CD4-positive, alpha-beta memory T cell (primary cell): ENCODE measurements at regions of chr13 and their contacts with region 1.

Region 1: DNA sequence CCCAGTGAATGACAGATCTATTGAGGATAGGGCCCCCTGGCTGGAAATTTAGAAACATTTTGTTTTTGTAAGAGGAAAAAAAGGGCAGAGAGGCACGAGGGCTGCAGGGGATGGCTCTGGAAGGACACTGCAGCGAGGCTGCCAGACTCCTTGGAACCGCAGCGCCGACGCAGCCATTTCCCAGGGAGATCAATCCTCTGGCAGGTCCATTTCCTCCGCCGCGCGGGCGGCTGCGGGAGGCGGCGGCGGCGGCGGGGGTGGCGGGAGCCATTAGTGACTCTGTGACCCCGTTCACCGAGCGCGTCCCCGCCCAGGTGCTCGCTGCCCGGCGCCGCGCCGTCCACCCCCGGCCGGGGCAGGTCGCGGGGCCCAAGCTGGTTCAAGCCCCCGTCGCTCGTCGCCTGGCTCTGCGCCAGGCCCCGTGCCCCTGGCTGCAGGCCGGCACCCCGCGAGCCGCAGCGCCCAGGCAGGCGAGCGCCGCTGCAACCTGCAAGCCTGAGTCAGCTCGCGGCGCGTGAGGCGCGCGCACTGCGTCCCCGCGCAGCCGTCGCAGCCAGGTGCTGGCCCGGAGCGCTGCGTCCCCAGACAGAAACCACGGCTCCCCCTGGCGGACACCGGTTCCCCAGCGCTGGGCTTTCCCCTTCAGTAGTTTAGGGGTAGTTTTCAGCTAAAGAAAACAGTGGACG is 192.6 kb downstream of the KATNAL1 start:
- DNase-seq: peak; percentile 89 to 91 (median 90)
- H3K4me3 ChIP-seq: peak overlapping the region in 1 of 2 donors; percentile 30
- H3K4me3 Mint-ChIP-seq: peak overlapping the region; percentile 80 to 88 (median 86)
- H3K27ac ChIP-seq: peak overlapping the region; percentile 22
- H3K27ac Mint-ChIP-seq: peak overlapping the region; percentile 64 to 94 (median 85)
- H3K4me1 ChIP-seq: peaks cover 29% of the 10 kb centered on the region
- H3K4me1 Mint-ChIP-seq: peaks cover 18 to 47% (median 34%) of the 10 kb centered on the region in 4 donors
- H3K27me3 ChIP-seq: no peaks in the 10 kb centered on the region
- H3K27me3 Mint-ChIP-seq: no peaks in the 10 kb centered on the region

Region 2: GRCh38 chr13:29508130-29508875 is 606.4 kb before region 1 on chr13:
- CTCF ChIA-PET with region 1: interaction called, 41 read pairs
- POLR2A ChIA-PET with region 1: interaction called, 6 read pairs
- intact Hi-C with region 1: loop called (anchors 1 kb)
- DNase-seq: peak; percentile 52 to 65 (median 55)
- H3K4me3 ChIP-seq: no peak overlapping the region
- H3K4me3 Mint-ChIP-seq: no peak overlapping the region
- H3K27ac ChIP-seq: no peak overlapping the region
- H3K27ac Mint-ChIP-seq: peak overlapping the region in 1 of 7 donors; percentile 24
- H3K4me1 ChIP-seq: no peaks in the 10 kb centered on the region
- H3K4me1 Mint-ChIP-seq: peaks cover 0 to 4% (median 0%) of the 10 kb centered on the region in 4 donors
- H3K27me3 ChIP-seq: no peaks in the 10 kb centered on the region
- H3K27me3 Mint-ChIP-seq: peaks cover 0 to 6% of the 10 kb centered on the region in 2 donors

Region 3: GRCh38 chr13:29782798-29783197 is 331.9 kb before region 1 on chr13:
- CTCF ChIA-PET with region 1: interaction called, 18 read pairs
- POLR2A ChIA-PET with region 1: no interaction called
- intact Hi-C with region 1: no loop called
- DNase-seq: no peak
- H3K4me3 ChIP-seq: no peak overlapping the region
- H3K4me3 Mint-ChIP-seq: no peak overlapping the region
- H3K27ac ChIP-seq: no peak overlapping the region
- H3K27ac Mint-ChIP-seq: peak overlapping the region in 1 of 7 donors; percentile 31
- H3K4me1 ChIP-seq: peaks cover 7% of the 10 kb centered on the region
- H3K4me1 Mint-ChIP-seq: peaks cover 18 to 48% (median 37%) of the 10 kb centered on the region in 4 donors
- H3K27me3 ChIP-seq: no peaks in the 10 kb centered on the region
- H3K27me3 Mint-ChIP-seq: no peaks in the 10 kb centered on the region

Region 4: DNA sequence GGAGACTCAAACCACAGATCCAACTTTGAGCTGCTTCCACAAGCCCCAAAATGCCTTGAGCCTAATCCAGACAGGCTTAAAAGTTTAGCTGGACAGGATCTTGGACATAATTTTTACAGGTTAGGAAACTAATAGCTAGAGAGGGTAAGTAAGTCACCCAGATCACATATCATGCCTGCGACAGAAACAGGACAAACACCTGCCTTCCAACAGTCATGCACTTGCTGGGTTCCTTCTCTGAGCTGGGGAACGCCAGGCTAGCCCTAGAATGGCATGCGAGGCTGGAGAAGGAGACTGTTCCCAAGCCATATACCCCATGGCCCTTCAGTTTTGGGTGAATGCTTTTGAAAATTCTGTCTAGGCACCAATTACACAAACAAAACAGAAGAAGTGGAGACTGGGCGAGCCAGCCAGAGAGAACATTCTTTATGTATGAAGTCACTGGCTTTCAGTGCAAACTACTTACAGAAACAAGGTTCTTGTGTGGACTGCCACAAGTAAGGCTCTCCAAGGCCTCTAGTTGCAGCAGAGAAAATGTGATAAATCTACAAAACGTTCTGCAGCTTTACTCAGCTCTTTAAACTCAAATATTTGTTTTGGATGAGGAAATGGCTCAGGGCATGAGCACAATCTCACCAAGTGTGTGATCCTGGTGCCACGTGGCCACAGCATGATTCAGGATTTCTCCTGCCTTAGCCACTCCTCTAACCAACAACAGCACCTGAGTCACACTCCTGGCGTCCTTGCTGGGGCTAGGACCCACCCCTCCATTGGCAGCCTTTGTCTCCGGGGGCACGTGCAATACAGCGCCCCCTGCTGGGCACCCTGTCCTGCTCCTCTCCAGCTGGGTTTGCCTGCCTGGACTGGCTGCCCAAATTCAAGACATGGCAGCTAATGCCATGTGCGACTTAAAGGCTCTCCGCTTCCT is 190.9 kb before region 1 on chr13:
- CTCF ChIA-PET with region 1: interaction called, 18 read pairs
- POLR2A ChIA-PET with region 1: interaction called, 6 read pairs
- intact Hi-C with region 1: no loop called
- DNase-seq: peak; percentile 16 to 64 (median 40)
- H3K4me3 ChIP-seq: no peak overlapping the region
- H3K4me3 Mint-ChIP-seq: peak overlapping the region in 2 of 8 donors; percentile 14 to 34
- H3K27ac ChIP-seq: no peak overlapping the region
- H3K27ac Mint-ChIP-seq: peak overlapping the region in 1 of 7 donors; percentile 53
- H3K4me1 ChIP-seq: peaks cover 17% of the 10 kb centered on the region
- H3K4me1 Mint-ChIP-seq: peaks cover 19 to 38% (median 28%) of the 10 kb centered on the region in 4 donors
- H3K27me3 ChIP-seq: no peaks in the 10 kb centered on the region
- H3K27me3 Mint-ChIP-seq: no peaks in the 10 kb centered on the region

Region 5: GRCh38 chr13:30125422-30126073 is 10.8 kb after region 1 on chr13:
- CTCF ChIA-PET with region 1: interaction called, 27 read pairs
- POLR2A ChIA-PET with region 1: interaction called, 6 read pairs
- intact Hi-C with region 1: no loop called
- DNase-seq: no peak
- H3K4me3 ChIP-seq: no peak overlapping the region
- H3K4me3 Mint-ChIP-seq: no peak overlapping the region
- H3K27ac ChIP-seq: no peak overlapping the region
- H3K27ac Mint-ChIP-seq: no peak overlapping the region
- H3K4me1 ChIP-seq: peaks cover 16% of the 10 kb centered on the region
- H3K4me1 Mint-ChIP-seq: peaks cover 13 to 24% (median 16%) of the 10 kb centered on the region in 4 donors
- H3K27me3 ChIP-seq: no peaks in the 10 kb centered on the region
- H3K27me3 Mint-ChIP-seq: peaks cover 0 to 1% of the 10 kb centered on the region in 2 donors

Region 6: DNA sequence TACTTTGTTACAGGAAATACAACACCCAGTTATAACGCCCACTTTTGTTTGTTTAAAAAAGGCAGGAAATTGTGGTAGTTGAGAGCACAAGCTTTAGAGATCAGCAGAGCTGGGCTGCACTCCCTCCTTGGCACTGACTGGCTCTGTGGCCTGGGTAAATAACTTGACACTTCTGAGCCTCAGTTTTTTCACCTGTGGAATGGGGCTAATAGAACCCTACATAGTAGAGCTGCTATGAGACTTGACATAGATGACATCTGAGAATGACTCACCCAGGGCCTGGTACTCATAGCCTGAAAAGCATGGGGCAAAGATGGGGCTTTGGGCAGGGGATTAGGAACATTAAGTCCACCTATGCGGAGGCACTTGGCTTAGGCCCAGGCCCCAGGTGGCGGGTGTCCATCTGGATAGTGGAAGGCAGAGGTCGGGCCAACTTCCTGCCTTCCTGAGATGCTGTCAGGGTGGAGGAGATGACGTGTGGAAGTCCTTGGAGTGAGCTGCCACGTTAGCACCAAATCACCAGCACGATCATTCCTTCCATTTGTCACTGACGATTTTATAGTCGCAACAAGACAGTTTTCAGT is 33.5 kb after region 1 on chr13:
- CTCF ChIA-PET with region 1: interaction called, 10 read pairs
- POLR2A ChIA-PET with region 1: interaction called, 12 read pairs
- intact Hi-C with region 1: no loop called
- DNase-seq: peak; percentile 73 to 81 (median 80)
- H3K4me3 ChIP-seq: peak overlapping the region in 1 of 2 donors; percentile 31
- H3K4me3 Mint-ChIP-seq: peak overlapping the region in 7 of 8 donors; percentile 70 to 88 (median 75)
- H3K27ac ChIP-seq: peak overlapping the region; percentile 60
- H3K27ac Mint-ChIP-seq: peak overlapping the region; percentile 90 to 97 (median 93)
- H3K4me1 ChIP-seq: peaks cover 99% of the 10 kb centered on the region
- H3K4me1 Mint-ChIP-seq: peaks cover 79 to 100% (median 93%) of the 10 kb centered on the region in 4 donors
- H3K27me3 ChIP-seq: no peaks in the 10 kb centered on the region
- H3K27me3 Mint-ChIP-seq: no peaks in the 10 kb centered on the region